Dendritic cell treated with granulocyte-macrophage colony-stimulating factor and Interleukin-4, amounts not matched to agents 40 ng/mL and 50 ng/mL, for 4 days (primary cell): ENCODE measurements at regions of chr3 and their contacts with region 1.

Region 1: DNA sequence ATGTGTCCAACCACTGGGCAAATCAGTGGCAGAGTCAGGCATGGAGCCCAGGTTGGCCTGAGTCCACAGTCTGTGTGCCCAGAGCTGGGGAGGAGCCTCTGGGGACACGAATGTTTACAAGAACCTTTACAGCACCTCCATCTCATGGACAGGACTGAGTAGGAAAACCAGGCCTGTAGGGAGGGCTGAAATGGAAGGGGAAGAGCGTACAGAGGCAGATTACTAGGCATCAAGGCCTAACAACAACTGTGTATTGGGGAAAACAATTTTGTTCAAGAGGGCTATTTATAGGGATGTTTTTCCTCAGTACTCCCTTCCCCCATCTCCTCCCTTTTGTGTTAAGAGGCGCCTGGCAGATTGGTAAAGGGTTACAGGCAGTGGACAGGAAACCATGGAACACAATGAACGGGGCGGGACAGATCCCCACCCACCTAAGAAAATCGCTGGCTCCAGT is 15.1 kb upstream of the ARHGAP31 start:
- H3K4me3 Mint-ChIP-seq: no peak overlapping the region
- H3K27ac Mint-ChIP-seq: peak overlapping the region; percentile 12
- H3K4me1 Mint-ChIP-seq: peaks cover 33% of the 10 kb centered on the region
- H3K27me3 Mint-ChIP-seq: no peaks in the 10 kb centered on the region

Region 2: GRCh38 chr3:119310071-119310470 is 30.9 kb after region 1 on chr3:
- intact Hi-C with region 1: no loop called
- H3K4me3 Mint-ChIP-seq: peak overlapping the region; percentile 37
- H3K27ac Mint-ChIP-seq: peak overlapping the region; percentile 62
- H3K4me1 Mint-ChIP-seq: peaks cover 70% of the 10 kb centered on the region
- H3K27me3 Mint-ChIP-seq: no peaks in the 10 kb centered on the region

Region 3: GRCh38 chr3:119329551-119329950 is 50.4 kb after region 1 on chr3:
- intact Hi-C with region 1: loop called (anchors 5 kb)
- H3K4me3 Mint-ChIP-seq: no peak overlapping the region
- H3K27ac Mint-ChIP-seq: no peak overlapping the region
- H3K4me1 Mint-ChIP-seq: peaks cover 62% of the 10 kb centered on the region
- H3K27me3 Mint-ChIP-seq: no peaks in the 10 kb centered on the region

Region 4: GRCh38 chr3:119343719-119344118 is 64.6 kb after region 1 on chr3:
- intact Hi-C with region 1: loop called (anchors 5 kb)
- H3K4me3 Mint-ChIP-seq: no peak overlapping the region
- H3K27ac Mint-ChIP-seq: peak overlapping the region; percentile 24
- H3K4me1 Mint-ChIP-seq: peaks cover 53% of the 10 kb centered on the region
- H3K27me3 Mint-ChIP-seq: no peaks in the 10 kb centered on the region

Region 5: DNA sequence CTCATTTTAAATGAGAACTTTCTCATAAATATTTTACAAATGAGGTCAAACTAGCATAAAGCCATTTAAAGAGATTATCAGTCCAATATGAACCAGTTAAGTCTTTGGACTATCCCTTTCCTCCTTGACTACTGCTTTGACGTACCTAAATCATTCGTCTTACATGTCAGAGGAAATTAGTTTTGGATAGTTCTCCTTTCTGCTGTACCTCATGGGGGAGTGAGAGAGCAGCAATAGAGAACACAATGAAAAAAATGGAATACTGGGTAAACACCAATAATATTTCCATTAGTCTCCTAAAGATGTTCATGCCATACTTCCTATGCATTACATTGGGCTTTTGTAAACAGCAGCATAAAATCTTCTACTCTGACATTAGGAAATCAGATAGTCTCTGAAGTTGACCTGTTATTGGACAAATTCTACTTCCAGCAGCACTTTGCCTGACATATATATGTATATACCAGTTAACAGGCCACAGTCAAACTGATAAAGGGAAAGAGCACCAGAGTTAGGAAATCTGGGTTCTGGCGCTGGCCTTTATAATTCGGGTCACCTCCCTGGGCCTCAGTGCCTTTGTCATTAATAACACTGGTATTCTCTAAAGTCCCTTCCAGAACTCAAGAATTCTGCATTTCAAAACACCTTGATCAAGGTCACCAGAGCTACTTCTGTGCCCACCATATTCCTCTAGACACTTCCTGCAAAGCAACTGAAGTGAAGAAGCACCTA is 246.0 kb after region 1 on chr3:
- intact Hi-C with region 1: no loop called
- H3K4me3 Mint-ChIP-seq: no peak overlapping the region
- H3K27ac Mint-ChIP-seq: peak overlapping the region; percentile 51
- H3K4me1 Mint-ChIP-seq: peaks cover 39% of the 10 kb centered on the region
- H3K27me3 Mint-ChIP-seq: no peaks in the 10 kb centered on the region

Region 6: DNA sequence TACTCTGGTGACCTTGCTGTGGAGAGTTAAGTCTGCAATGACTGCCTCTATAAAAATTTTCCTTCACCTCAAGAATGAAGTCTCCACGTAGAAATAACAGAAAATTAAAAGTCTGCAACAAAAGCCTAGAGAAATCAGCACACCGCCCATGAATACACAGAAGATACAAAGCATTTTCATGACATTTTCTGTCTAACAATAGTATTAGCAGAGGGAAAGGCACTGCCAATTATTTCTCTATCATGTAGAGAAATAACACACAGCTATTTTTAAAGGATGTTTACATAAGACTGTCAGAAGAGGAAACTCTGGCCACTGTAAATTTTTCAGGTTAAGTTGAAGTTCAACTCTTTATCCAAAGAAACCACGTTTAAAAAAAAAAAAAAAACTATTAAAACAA is 734.4 kb after region 1 on chr3:
- intact Hi-C with region 1: no loop called
- H3K4me3 Mint-ChIP-seq: no peak overlapping the region
- H3K27ac Mint-ChIP-seq: no peak overlapping the region
- H3K4me1 Mint-ChIP-seq: peaks cover 11% of the 10 kb centered on the region
- H3K27me3 Mint-ChIP-seq: no peaks in the 10 kb centered on the region